Common myeloid progenitor, CD34-positive (primary cell): ENCODE measurements at regions of chr7 and their contacts with region 1.

Region 1: DNA sequence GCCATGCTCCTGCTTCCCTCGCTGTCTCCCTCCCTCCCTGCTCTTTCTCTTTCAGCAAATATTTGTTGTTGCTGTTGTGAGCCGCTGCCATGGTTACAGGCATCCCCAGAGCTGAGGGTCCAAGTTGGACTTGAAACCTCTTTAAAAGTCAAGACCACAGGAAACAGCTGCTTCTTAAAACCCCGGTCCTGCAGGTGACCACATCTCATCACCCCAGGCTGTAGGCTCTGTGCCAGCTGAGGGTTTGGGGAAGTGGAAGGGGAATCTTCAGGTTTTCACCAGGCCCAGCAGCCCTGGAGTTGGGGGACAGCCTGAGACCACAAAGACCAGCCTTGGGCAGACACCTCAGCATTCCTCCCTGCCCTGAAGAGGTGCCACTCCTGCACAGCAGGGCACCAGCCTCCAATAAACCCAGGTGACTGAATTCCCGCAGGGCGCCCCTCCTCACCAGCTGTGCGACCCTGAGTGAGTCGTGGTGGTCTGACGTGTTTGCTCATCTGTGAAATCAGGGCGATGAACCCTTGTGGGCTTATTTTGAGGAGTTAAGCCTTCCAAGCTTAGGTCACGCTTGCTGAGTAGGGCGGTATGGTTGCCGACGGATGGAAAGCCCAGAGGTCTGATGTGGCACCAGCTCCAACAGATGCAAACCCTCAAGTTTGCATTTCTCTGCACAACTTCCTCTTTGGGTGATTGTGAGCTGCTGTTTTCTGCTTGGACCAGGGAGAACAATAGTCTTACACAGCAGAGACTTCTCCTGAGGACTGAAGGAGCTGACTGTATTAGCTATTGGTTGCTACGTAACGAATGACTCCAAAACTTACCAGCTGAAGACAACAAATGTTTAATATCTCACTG is 24.8 kb downstream of the NPTX2 start:
- DNase-seq: peak; percentile 98 to 100 (median 100)
- H3K4me3 ChIP-seq: peak overlapping the region in 3 of 7 experiments; percentile 33 to 60 (median 50)
- H3K27ac ChIP-seq: peak overlapping the region; percentile 93 to 95
- H3K4me1 ChIP-seq: peaks cover 0 to 37% (median 33%) of the 10 kb centered on the region in 4 experiments
- H3K27me3 ChIP-seq: no peaks in the 10 kb centered on the region

Region 2: DNA sequence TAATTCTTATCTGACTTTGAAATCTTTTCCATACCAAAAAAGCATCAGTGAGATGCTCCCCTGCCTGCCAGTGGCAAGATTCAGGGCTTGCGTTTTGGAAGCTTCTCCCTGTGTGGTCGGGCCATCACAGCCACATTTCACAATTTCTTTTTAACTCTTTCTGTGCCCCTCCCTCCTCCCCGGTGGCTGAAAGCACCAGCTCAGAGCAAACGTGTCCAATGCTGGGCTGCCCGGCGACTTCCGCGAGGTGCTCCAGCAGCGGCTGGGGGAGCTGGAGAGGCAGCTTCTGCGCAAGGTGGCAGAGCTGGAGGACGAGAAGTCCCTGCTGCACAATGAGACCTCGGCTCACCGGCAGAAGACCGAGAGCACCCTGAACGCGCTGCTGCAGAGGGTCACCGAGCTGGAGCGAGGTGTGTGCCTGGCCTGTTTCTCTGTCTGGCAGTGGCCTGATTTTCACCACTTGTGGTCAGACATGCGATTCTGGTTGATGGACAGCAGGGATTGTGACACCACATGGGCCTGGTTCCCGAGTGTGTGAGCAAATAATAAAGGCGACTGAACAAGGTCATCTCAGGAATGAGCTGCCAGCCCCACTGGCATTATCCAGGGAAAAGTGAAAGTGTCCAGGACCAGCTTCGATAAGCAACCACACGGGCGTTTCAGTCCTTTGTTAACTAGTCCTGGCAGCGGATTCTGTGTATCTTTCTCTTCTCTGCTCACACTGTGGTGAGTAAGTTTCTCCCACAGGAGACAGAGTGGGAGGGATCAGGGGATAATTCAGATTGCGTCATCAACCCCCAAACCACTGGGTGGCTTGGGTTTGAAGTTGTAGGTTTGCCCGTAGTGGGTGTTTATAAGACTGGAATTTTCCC is 22.2 kb before region 1 on chr7:
- CTCF ChIA-PET with region 1: interaction called, 23 read pairs
- POLR2A ChIA-PET with region 1: interaction called, 8 read pairs
- DNase-seq: peak in 2 of 3 donors; percentile 56 to 70
- H3K4me3 ChIP-seq: peak overlapping the region in 4 of 7 experiments; percentile 1 to 28 (median 6)
- H3K27ac ChIP-seq: no peak overlapping the region
- H3K4me1 ChIP-seq: peaks cover 4 to 54% (median 35%) of the 10 kb centered on the region in 4 experiments
- H3K27me3 ChIP-seq: peaks cover 13 to 85% (median 34%) of the 10 kb centered on the region in 5 experiments

Region 3: GRCh38 chr7:98629001-98629431 is 12.9 kb before region 1 on chr7:
- CTCF ChIA-PET with region 1: interaction called, 11 read pairs
- POLR2A ChIA-PET with region 1: interaction called, 15 read pairs
- DNase-seq: peak; percentile 83 to 97 (median 95)
- H3K4me3 ChIP-seq: peak overlapping the region in 2 of 7 experiments; percentile 24 to 37
- H3K27ac ChIP-seq: no peak overlapping the region
- H3K4me1 ChIP-seq: peaks cover 0 to 25% (median 15%) of the 10 kb centered on the region in 4 experiments
- H3K27me3 ChIP-seq: peaks cover 0 to 33% (median 5%) of the 10 kb centered on the region in 5 experiments

Region 4: GRCh38 chr7:98681951-98682350 is 40.1 kb after region 1 on chr7:
- CTCF ChIA-PET with region 1: interaction called, 8 read pairs
- POLR2A ChIA-PET with region 1: interaction called, 10 read pairs
- DNase-seq: peak; percentile 86 to 98 (median 96)
- H3K4me3 ChIP-seq: peak overlapping the region in 4 of 7 experiments; percentile 20 to 67 (median 50)
- H3K27ac ChIP-seq: peak overlapping the region; percentile 62 to 86
- H3K4me1 ChIP-seq: peaks cover 4 to 19% (median 17%) of the 10 kb centered on the region in 4 experiments
- H3K27me3 ChIP-seq: no peaks in the 10 kb centered on the region